Adrenal gland (tissue), 19 donors: ENCODE measurements at regions of chr12 and their contacts with region 1.

Region 1: DNA sequence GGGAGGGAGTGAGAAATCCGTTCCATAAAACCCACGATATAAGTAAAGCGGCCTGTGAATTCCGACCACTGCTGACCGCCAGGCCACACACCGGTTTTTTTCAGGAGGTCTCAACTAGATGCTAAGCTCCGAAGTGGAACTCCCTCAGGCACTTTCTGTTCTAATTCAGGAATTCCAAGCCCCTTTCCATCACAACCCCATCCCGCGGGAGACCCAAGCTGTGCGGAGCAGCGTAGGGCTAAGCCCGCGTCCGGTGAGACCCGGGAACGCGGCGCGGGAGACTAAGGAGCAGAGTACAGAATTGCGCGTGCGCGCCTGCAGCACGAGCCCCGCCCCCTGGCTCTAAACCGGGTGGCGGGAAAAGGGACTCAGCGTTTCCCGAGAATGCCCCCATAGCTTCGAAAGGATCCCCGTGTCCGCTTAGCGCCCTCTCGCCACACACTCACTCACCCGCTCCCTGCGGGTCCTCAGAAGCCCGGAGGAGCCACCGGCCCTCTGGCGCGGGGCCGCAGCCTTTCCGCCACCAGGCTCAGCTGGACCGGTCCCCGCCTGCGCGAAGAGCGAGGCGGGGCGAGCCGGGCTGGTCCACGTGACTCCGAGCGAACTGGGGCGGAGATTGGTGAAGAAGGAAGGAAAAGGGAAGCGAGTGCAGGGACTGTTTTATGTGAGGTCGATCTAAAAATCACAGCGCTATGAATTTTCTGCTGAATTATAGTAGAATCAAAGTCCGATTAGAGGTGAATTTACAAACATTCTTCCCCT is at the start of gene TIMELESS:
- DNase-seq: peak; percentile 87 to 91 (median 88)
- H3K4me3 ChIP-seq: peak within 1 kb of the TSS; percentile 13 to 74 (median 58)
- H3K27ac ChIP-seq: peak within 1 kb of the TSS; percentile 19 to 89 (median 77)
- H3K4me1 ChIP-seq: peaks cover 0 to 10% of the 10 kb centered on the region in 2 donors
- H3K27me3 ChIP-seq: no peaks in the 10 kb centered on the region
- CTCF ChIP-seq: peak in 5 of 6 experiments; percentile 11 to 36 (median 21)
- POLR2A ChIP-seq: peak; percentile 51 to 69
- total RNA-seq, gene TIMELESS: 5.9 to 9.3 (median 7.3) TPM

Region 2: GRCh38 chr12:56359851-56360767 is 88.9 kb before region 1 on chr12 and contains the start of gene STAT2:
- intact Hi-C with region 1: loop called (anchors 10 kb)
- DNase-seq: peak; percentile 99 to 100 (median 99)
- H3K4me3 ChIP-seq: peak within 1 kb of the TSS; percentile 42 to 82 (median 68)
- H3K27ac ChIP-seq: peak within 1 kb of the TSS; percentile 70 to 95 (median 86)
- H3K4me1 ChIP-seq: peaks cover 14 to 24% of the 10 kb centered on the region in 2 donors
- H3K27me3 ChIP-seq: no peaks in the 10 kb centered on the region
- CTCF ChIP-seq: no peak
- POLR2A ChIP-seq: peak; percentile 40 to 87
- total RNA-seq, gene STAT2: 74.2 to 197 (median 101) TPM

Region 3: GRCh38 chr12:56374726-56375597 is 74.1 kb before region 1 on chr12:
- intact Hi-C with region 1: loop called in 1 of 2 experiments (anchors 5 kb)
- DNase-seq: peak in 1 of 7 donors; percentile 20
- H3K4me3 ChIP-seq: no peak overlapping the region
- H3K27ac ChIP-seq: no peak overlapping the region
- H3K4me1 ChIP-seq: no peaks in the 10 kb centered on the region
- H3K27me3 ChIP-seq: no peaks in the 10 kb centered on the region
- CTCF ChIP-seq: no peak
- POLR2A ChIP-seq: no peak

Region 4: GRCh38 chr12:56541631-56542030 is 92.6 kb after region 1 on chr12:
- intact Hi-C with region 1: no loop called
- DNase-seq: no peak
- H3K4me3 ChIP-seq: no peak overlapping the region
- H3K27ac ChIP-seq: no peak overlapping the region
- H3K4me1 ChIP-seq: peaks cover 0 to 10% of the 10 kb centered on the region in 2 donors
- H3K27me3 ChIP-seq: no peaks in the 10 kb centered on the region
- CTCF ChIP-seq: no peak
- POLR2A ChIP-seq: no peak